ENCODE measurements at regions of chr3 and their contacts with region 1.

Region 1: GRCh38 chr3:108124337-108125152 is 33.7 kb upstream of the CD47 start:
- DNase-seq: peak; percentile 71
- H3K4me3 Mint-ChIP-seq: peak overlapping the region; percentile 84
- H3K27ac Mint-ChIP-seq: peak overlapping the region; percentile 99
- H3K4me1 Mint-ChIP-seq: peaks cover 61% of the 10 kb centered on the region
- H3K27me3 Mint-ChIP-seq: no peaks in the 10 kb centered on the region

Region 2: DNA sequence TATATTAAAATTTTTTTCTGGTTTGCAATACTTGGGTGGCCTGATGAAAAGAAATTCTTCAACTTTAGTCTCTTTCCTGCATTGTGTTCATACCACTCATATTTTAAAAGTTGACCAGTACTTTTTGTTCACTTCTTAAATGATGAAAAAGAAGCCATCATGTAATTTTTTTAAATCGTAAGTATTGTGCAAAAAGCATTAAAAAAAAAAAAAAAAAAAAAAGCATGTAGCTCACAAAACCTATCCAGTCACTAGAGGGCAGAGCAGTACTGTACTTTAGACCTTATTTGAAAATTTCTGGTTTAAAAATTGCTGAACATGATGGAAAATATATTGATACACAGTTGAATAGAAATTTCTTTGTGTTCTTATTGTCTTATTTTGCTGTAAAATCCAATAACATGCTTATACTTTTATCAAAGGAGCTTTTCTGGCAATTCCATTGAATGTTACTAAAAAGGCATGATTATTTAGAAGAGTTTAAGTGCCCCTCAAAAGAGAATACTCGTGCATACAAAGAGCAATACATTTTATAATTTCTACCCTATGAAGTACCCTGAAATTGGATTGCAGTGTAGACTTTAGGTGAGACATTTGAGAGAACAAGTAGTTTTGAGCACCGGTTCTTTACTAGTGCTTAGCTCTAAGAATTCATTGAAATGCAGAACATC is 464.1 kb before region 1 on chr3:
- CTCF ChIA-PET with region 1: no interaction called
- POLR2A ChIA-PET with region 1: no interaction called
- DNase-seq: no peak
- H3K4me3 Mint-ChIP-seq: no peak overlapping the region
- H3K27ac Mint-ChIP-seq: no peak overlapping the region
- H3K4me1 Mint-ChIP-seq: peaks cover 16% of the 10 kb centered on the region
- H3K27me3 Mint-ChIP-seq: no peaks in the 10 kb centered on the region

Region 3: DNA sequence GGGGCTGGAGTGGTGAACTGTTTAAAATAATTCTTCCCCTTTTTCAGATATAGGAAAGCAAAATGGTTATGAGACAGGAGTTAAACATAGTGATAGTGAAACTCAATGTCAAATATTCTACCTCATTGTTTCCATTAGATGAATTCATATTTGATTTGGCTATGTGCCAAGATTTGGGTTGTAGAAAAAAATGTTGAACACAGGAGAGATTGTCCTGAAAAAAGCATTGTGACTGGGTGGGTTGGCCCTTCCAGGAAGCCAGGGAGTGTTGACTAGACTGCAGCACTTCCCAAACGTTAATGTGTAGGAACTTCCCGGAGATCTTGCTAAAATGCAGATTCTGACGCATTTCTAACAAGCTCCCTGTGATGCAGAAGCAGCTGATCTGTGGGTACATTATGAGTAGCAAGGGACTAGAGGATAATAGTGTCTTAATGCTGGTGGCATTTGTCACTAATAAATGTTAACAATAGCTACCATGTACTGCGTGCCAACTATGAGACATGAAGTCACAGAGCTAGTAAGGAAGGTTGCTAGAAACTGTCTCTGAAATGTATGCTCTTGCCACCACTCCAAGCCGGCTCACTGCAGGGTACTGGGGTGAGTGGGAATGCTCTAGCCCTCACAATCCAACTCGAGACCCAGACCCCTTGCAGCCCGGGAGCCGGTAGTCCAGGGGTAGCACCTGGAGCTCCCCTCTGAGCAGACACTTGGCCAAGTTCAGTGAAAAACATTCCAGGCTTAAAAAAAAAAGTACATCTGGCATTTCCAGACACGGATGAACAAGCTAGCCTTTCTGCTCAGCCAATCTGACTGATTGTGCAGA is 154.3 kb before region 1 on chr3:
- CTCF ChIA-PET with region 1: no interaction called
- POLR2A ChIA-PET with region 1: no interaction called
- DNase-seq: no peak
- H3K4me3 Mint-ChIP-seq: no peak overlapping the region
- H3K27ac Mint-ChIP-seq: no peak overlapping the region
- H3K4me1 Mint-ChIP-seq: peaks cover 5% of the 10 kb centered on the region
- H3K27me3 Mint-ChIP-seq: peaks cover 3% of the 10 kb centered on the region

Region 4: GRCh38 chr3:107987036-107987947 is 137.3 kb before region 1 on chr3:
- CTCF ChIA-PET with region 1: no interaction called
- POLR2A ChIA-PET with region 1: interaction called, 11 read pairs
- DNase-seq: no peak
- H3K4me3 Mint-ChIP-seq: no peak overlapping the region
- H3K27ac Mint-ChIP-seq: peak overlapping the region; percentile 89
- H3K4me1 Mint-ChIP-seq: peaks cover 45% of the 10 kb centered on the region
- H3K27me3 Mint-ChIP-seq: no peaks in the 10 kb centered on the region

Region 5: GRCh38 chr3:108079877-108080659 is 44.5 kb before region 1 on chr3:
- CTCF ChIA-PET with region 1: no interaction called
- POLR2A ChIA-PET with region 1: interaction called, 259 read pairs
- DNase-seq: no peak
- H3K4me3 Mint-ChIP-seq: no peak overlapping the region
- H3K27ac Mint-ChIP-seq: no peak overlapping the region
- H3K4me1 Mint-ChIP-seq: peaks cover 55% of the 10 kb centered on the region
- H3K27me3 Mint-ChIP-seq: no peaks in the 10 kb centered on the region

Region 6: GRCh38 chr3:108090701-108091451 is 33.7 kb before region 1 on chr3 and contains the start of gene CD47:
- CTCF ChIA-PET with region 1: interaction called, 5 read pairs
- POLR2A ChIA-PET with region 1: interaction called, 259 read pairs
- DNase-seq: peak; percentile 97
- H3K4me3 Mint-ChIP-seq: peak within 1 kb of the TSS; percentile 99
- H3K27ac Mint-ChIP-seq: peak within 1 kb of the TSS; percentile 99
- H3K4me1 Mint-ChIP-seq: peaks cover 25% of the 10 kb centered on the region
- H3K27me3 Mint-ChIP-seq: no peaks in the 10 kb centered on the region
- total RNA-seq, gene CD47: 153 to 161 TPM

Region 7: GRCh38 chr3:108100906-108101660 is 23.5 kb before region 1 on chr3:
- CTCF ChIA-PET with region 1: no interaction called
- POLR2A ChIA-PET with region 1: interaction called, 14 read pairs
- DNase-seq: no peak
- H3K4me3 Mint-ChIP-seq: no peak overlapping the region
- H3K27ac Mint-ChIP-seq: peak overlapping the region; percentile 28
- H3K4me1 Mint-ChIP-seq: peaks cover 26% of the 10 kb centered on the region
- H3K27me3 Mint-ChIP-seq: peaks cover 2% of the 10 kb centered on the region

Region 8: GRCh38 chr3:108221911-108222852 is 97.6 kb after region 1 on chr3 and contains the start of gene IFT57:
- CTCF ChIA-PET with region 1: interaction called, 4 read pairs
- POLR2A ChIA-PET with region 1: interaction called, 75 read pairs
- DNase-seq: peak; percentile 96
- H3K4me3 Mint-ChIP-seq: peak within 1 kb of the TSS; percentile 97
- H3K27ac Mint-ChIP-seq: peak within 1 kb of the TSS; percentile 97
- H3K4me1 Mint-ChIP-seq: peaks cover 46% of the 10 kb centered on the region
- H3K27me3 Mint-ChIP-seq: no peaks in the 10 kb centered on the region
- total RNA-seq, gene IFT57: 21.0 to 28.0 TPM

Region 9: GRCh38 chr3:108292905-108293328 is 168.4 kb after region 1 on chr3:
- CTCF ChIA-PET with region 1: interaction called, 3 read pairs
- POLR2A ChIA-PET with region 1: interaction called, 14 read pairs
- DNase-seq: no peak
- H3K4me3 Mint-ChIP-seq: peak overlapping the region; percentile 7
- H3K27ac Mint-ChIP-seq: peak overlapping the region; percentile 89
- H3K4me1 Mint-ChIP-seq: peaks cover 59% of the 10 kb centered on the region
- H3K27me3 Mint-ChIP-seq: no peaks in the 10 kb centered on the region